Esophagus squamous epithelium (tissue), 5 donors: ENCODE measurements at regions of chr3 and their contacts with region 1.

Region 1: GRCh38 chr3:122679085-122679881 is 1.4 kb upstream of the PARP14 start:
- DNase-seq: peak; percentile 9
- H3K4me3 ChIP-seq: peak overlapping the region; percentile 73 to 97 (median 84)
- H3K27ac ChIP-seq: peak overlapping the region; percentile 93 to 98 (median 97)
- H3K4me1 ChIP-seq: peaks cover 18 to 51% (median 22%) of the 10 kb centered on the region in 3 donors
- H3K27me3 ChIP-seq: no peaks in the 10 kb centered on the region
- CTCF ChIP-seq: peak; percentile 70 to 87 (median 81)
- POLR2A ChIP-seq: no peak

Region 2: GRCh38 chr3:122392868-122393844 is 286.1 kb before region 1 on chr3:
- intact Hi-C with region 1: loop called (anchors 10 kb)
- DNase-seq: no peak
- H3K4me3 ChIP-seq: no peak overlapping the region
- H3K27ac ChIP-seq: no peak overlapping the region
- H3K4me1 ChIP-seq: peaks cover 0 to 36% (median 3%) of the 10 kb centered on the region in 3 donors
- H3K27me3 ChIP-seq: no peaks in the 10 kb centered on the region
- CTCF ChIP-seq: peak; percentile 30 to 74 (median 64)
- POLR2A ChIP-seq: no peak

Region 3: GRCh38 chr3:122564155-122564912 is 114.9 kb before region 1 on chr3 and contains the starts of genes DTX3L and PARP9:
- intact Hi-C with region 1: loop called (anchors 5 kb)
- DNase-seq: peak; percentile 16
- H3K4me3 ChIP-seq: peak within 1 kb of the TSS; percentile 75 to 92 (median 84)
- H3K27ac ChIP-seq: peak within 1 kb of the TSS; percentile 94 to 99 (median 97)
- H3K4me1 ChIP-seq: peaks cover 9 to 60% (median 19%) of the 10 kb centered on the region in 3 donors
- H3K27me3 ChIP-seq: no peaks in the 10 kb centered on the region
- CTCF ChIP-seq: no peak
- POLR2A ChIP-seq: peak in 2 of 4 donors; percentile 53 to 80
- total RNA-seq, gene DTX3L: 17.8 to 25.8 (median 19.9) TPM
- total RNA-seq, gene PARP9: 16.6 to 50.0 (median 19.9) TPM

Region 4: GRCh38 chr3:122572940-122573412 is 106.3 kb before region 1 on chr3:
- intact Hi-C with region 1: loop called (anchors 5 kb)
- DNase-seq: no peak
- H3K4me3 ChIP-seq: no peak overlapping the region
- H3K27ac ChIP-seq: peak overlapping the region; percentile 25 to 63 (median 46)
- H3K4me1 ChIP-seq: peaks cover 4 to 25% (median 13%) of the 10 kb centered on the region in 3 donors
- H3K27me3 ChIP-seq: no peaks in the 10 kb centered on the region
- CTCF ChIP-seq: peak in 1 of 6 experiments; percentile 11
- POLR2A ChIP-seq: no peak

Region 5: GRCh38 chr3:122793568-122794416 is 114.5 kb after region 1 on chr3 and contains the start of gene HSPBAP1:
- intact Hi-C with region 1: loop called (anchors 10 kb)
- DNase-seq: no peak
- H3K4me3 ChIP-seq: peak within 1 kb of the TSS; percentile 79 to 92 (median 82)
- H3K27ac ChIP-seq: peak within 1 kb of the TSS; percentile 95 to 97 (median 96)
- H3K4me1 ChIP-seq: peaks cover 4 to 88% (median 14%) of the 10 kb centered on the region in 3 donors
- H3K27me3 ChIP-seq: no peaks in the 10 kb centered on the region
- CTCF ChIP-seq: peak in 1 of 6 experiments; percentile 16
- POLR2A ChIP-seq: peak in 1 of 4 donors; percentile 74
- total RNA-seq, gene HSPBAP1: 3.4 to 13.9 (median 4.0) TPM

Region 6: GRCh38 chr3:123169492-123169929 is 490.2 kb after region 1 on chr3:
- intact Hi-C with region 1: no loop called
- DNase-seq: no peak
- H3K4me3 ChIP-seq: no peak overlapping the region
- H3K27ac ChIP-seq: no peak overlapping the region
- H3K4me1 ChIP-seq: no peaks in the 10 kb centered on the region
- H3K27me3 ChIP-seq: no peaks in the 10 kb centered on the region
- CTCF ChIP-seq: no peak
- POLR2A ChIP-seq: no peak